ENCODE measurements at regions of chr1 and their contacts with region 1.

Region 1: GRCh38 chr1:113759333-113760101 is at the start of gene PHTF1:
- DNase-seq: peak; percentile 74
- ATAC-seq: peak; percentile 80
- H3K4me3 Mint-ChIP-seq: peak within 1 kb of the TSS; percentile 96
- H3K27ac Mint-ChIP-seq: peak within 1 kb of the TSS; percentile 96
- H3K4me1 Mint-ChIP-seq: peaks cover 29% of the 10 kb centered on the region
- H3K27me3 Mint-ChIP-seq: no peaks in the 10 kb centered on the region
- total RNA-seq, gene PHTF1: 19.2 to 22.6 TPM

Region 2: GRCh38 chr1:113721010-113721409 is 38.5 kb before region 1 on chr1:
- POLR2A ChIA-PET with region 1: no interaction called
- DNase-seq: no peak
- ATAC-seq: no peak
- H3K4me3 Mint-ChIP-seq: no peak overlapping the region
- H3K27ac Mint-ChIP-seq: no peak overlapping the region
- H3K4me1 Mint-ChIP-seq: peaks cover under 1% of the 10 kb centered on the region
- H3K27me3 Mint-ChIP-seq: no peaks in the 10 kb centered on the region

Region 3: DNA sequence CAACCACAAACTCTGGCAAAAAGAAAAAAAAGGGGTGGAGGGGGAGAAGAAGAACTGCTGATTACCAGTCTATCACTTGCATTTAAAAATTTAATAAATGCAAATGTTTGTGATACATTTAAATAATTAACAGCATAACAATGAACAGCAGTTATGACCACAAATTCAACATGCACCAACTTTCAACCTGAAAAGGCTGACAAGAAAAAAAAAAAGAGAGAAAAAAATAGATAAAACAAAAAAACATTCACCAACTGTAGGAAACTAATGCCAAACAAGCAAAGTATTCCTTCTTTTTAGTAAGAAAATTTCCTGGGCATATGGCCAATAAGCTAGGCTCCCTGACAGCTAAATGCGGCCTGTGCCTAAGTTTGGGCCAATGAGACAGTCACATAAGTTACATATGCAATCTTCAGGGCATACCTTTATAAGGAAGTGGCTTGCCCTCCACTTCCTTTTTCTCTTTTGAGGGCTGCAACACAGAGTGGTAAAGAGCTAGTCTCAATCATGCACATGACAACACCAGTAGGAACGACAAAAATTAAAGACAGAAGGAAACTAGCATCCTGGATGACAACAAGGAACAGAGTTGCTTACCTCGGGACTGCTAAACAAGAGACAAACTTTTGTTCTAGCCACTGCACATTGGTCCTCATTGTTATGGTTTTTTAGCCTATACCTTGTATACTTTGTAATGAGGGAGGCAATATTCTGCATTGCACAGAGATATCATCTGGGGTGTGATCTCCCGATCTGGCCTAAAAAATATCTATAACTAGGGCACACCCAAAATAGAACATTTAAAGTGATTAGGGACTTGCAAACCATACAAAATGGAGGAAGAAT is 24.0 kb after region 1 on chr1:
- POLR2A ChIA-PET with region 1: interaction called, 23 read pairs
- DNase-seq: peak; percentile 38
- ATAC-seq: peak; percentile 97
- H3K4me3 Mint-ChIP-seq: peak overlapping the region; percentile 81
- H3K27ac Mint-ChIP-seq: peak overlapping the region; percentile 98
- H3K4me1 Mint-ChIP-seq: peaks cover 43% of the 10 kb centered on the region
- H3K27me3 Mint-ChIP-seq: no peaks in the 10 kb centered on the region

Region 4: DNA sequence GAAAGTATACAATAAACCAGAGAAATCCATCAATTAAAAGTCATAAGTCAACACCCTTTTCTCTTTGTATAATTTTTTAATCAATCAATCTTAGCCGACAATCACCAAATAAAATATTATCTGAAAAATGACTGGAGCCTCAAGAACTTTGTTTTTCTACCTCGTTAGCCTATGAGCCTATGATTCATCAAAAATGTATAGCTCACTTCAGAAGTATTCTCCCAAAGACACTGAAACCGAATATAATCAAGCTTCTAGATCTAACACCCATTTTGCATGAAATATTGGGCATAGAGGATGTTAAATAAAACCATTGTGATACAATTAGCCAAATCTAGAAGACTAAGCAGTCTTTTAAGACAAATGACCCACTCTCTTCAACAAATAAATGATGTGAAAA is 70.5 kb after region 1 on chr1:
- POLR2A ChIA-PET with region 1: no interaction called
- DNase-seq: no peak
- ATAC-seq: no peak
- H3K4me3 Mint-ChIP-seq: no peak overlapping the region
- H3K27ac Mint-ChIP-seq: no peak overlapping the region
- H3K4me1 Mint-ChIP-seq: no peaks in the 10 kb centered on the region
- H3K27me3 Mint-ChIP-seq: no peaks in the 10 kb centered on the region

Region 5: GRCh38 chr1:114700036-114700600 is 940.6 kb after region 1 on chr1:
- POLR2A ChIA-PET with region 1: interaction called, 10 read pairs
- DNase-seq: no peak
- ATAC-seq: no peak
- H3K4me3 Mint-ChIP-seq: no peak overlapping the region
- H3K27ac Mint-ChIP-seq: no peak overlapping the region
- H3K4me1 Mint-ChIP-seq: peaks cover 2% of the 10 kb centered on the region
- H3K27me3 Mint-ChIP-seq: peaks cover 6% of the 10 kb centered on the region